Tibial artery (tissue), 4 donors: ENCODE measurements at regions of chr2 and their contacts with region 1.

Region 1: GRCh38 chr2:169798718-169799592 is at the start of gene SSB:
- DNase-seq: peak; percentile 90 to 94
- H3K4me3 ChIP-seq: peak within 1 kb of the TSS; percentile 79 to 86
- H3K27ac ChIP-seq: peak within 1 kb of the TSS; percentile 85 to 89
- H3K4me1 ChIP-seq: peaks cover 0 to 32% (median 15%) of the 10 kb centered on the region in 4 donors
- H3K27me3 ChIP-seq: no peaks in the 10 kb centered on the region
- CTCF ChIP-seq: peak in 1 of 2 experiments; percentile 9

Region 2: GRCh38 chr2:169721016-169721415 is 77.9 kb before region 1 on chr2:
- intact Hi-C with region 1: no loop called
- DNase-seq: no peak
- H3K4me3 ChIP-seq: no peak overlapping the region
- H3K27ac ChIP-seq: no peak overlapping the region
- H3K4me1 ChIP-seq: peaks cover 0 to 1% (median under 1%) of the 10 kb centered on the region in 4 donors
- H3K27me3 ChIP-seq: no peaks in the 10 kb centered on the region
- CTCF ChIP-seq: no peak

Region 3: GRCh38 chr2:169732583-169733358 is 66.2 kb before region 1 on chr2:
- intact Hi-C with region 1: loop called (anchors 2 kb)
- DNase-seq: no peak
- H3K4me3 ChIP-seq: peak overlapping the region; percentile 75 to 89
- H3K27ac ChIP-seq: peak overlapping the region; percentile 74
- H3K4me1 ChIP-seq: peaks cover 0 to 41% (median 10%) of the 10 kb centered on the region in 4 donors
- H3K27me3 ChIP-seq: no peaks in the 10 kb centered on the region
- CTCF ChIP-seq: no peak